Panc1 (cell line): ENCODE measurements at regions of chr3 and their contacts with region 1.

Region 1: GRCh38 chr3:166274351-166275023 is 437.3 kb upstream of the BCHE start:
- DNase-seq: no peak
- ATAC-seq: no peak
- H3K4me3 ChIP-seq: no peak overlapping the region
- H3K27ac ChIP-seq: no peak overlapping the region
- H3K4me1 ChIP-seq: no peaks in the 10 kb centered on the region
- H3K27me3 ChIP-seq: no peaks in the 10 kb centered on the region
- CTCF ChIP-seq: no peak

Region 2: GRCh38 chr3:165854696-165855095 is 419.8 kb before region 1 on chr3:
- CTCF ChIA-PET with region 1: no interaction called
- POLR2A ChIA-PET with region 1: no interaction called
- in situ Hi-C with region 1: no loop called
- intact Hi-C with region 1: loop called (anchors 10 kb)
- DNase-seq: no peak
- ATAC-seq: no peak
- H3K4me3 ChIP-seq: no peak overlapping the region
- H3K27ac ChIP-seq: no peak overlapping the region
- H3K4me1 ChIP-seq: no peaks in the 10 kb centered on the region
- H3K27me3 ChIP-seq: no peaks in the 10 kb centered on the region
- CTCF ChIP-seq: peak; percentile 73